Activated naive CD4-positive, alpha-beta T cell treated with anti-CD3 and anti-CD28 coated beads for 36 hours (primary cell): ENCODE measurements at regions of chr1 and their contacts with region 1.

Region 1: DNA sequence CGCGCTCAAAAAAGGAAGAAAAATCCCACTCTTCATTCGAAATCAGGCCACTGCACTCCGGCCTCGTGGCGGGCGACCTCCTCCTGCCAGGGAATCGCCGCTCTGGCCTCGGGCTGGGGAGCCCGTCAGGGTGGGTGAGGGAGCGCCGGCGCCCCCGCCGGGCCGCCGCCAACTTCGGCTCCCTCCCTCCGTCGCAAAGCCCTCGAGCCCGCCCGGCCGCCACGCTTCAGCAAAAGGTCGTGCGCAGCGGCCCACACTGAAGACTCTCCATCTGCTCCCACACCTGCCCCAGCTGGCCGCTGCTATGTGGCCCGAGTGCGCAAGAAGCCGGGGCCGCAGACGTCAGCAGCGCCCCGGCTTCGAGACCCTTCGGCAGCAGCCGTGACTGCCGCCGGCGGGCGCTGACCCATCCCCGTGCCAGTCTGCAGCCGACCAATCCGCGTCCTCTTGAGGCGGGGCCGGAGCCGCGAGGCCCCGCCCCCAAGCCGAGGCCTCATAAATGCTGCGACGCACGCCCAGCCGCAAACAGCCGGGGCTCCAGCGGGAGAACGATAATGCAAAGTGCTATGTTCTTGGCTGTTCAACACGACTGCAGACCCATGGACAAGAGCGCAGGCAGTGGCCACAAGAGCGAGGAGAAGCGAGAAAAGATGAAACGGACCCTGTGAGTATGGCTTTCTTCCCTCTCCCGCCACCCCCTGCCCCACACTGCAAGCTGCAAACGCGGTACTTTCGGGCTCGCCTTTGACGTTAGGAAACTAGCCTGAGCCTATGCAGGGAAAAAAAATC is at the start of gene RGS2:
- DNase-seq: peak; percentile 86
- H3K4me3 Mint-ChIP-seq: peak within 1 kb of the TSS; percentile 96
- H3K27ac Mint-ChIP-seq: peak within 1 kb of the TSS; percentile 82
- H3K4me1 Mint-ChIP-seq: peaks cover 31% of the 10 kb centered on the region
- H3K27me3 Mint-ChIP-seq: peaks cover 2% of the 10 kb centered on the region
- total RNA-seq, gene RGS2: 11.7 to 11.8 TPM

Region 2: DNA sequence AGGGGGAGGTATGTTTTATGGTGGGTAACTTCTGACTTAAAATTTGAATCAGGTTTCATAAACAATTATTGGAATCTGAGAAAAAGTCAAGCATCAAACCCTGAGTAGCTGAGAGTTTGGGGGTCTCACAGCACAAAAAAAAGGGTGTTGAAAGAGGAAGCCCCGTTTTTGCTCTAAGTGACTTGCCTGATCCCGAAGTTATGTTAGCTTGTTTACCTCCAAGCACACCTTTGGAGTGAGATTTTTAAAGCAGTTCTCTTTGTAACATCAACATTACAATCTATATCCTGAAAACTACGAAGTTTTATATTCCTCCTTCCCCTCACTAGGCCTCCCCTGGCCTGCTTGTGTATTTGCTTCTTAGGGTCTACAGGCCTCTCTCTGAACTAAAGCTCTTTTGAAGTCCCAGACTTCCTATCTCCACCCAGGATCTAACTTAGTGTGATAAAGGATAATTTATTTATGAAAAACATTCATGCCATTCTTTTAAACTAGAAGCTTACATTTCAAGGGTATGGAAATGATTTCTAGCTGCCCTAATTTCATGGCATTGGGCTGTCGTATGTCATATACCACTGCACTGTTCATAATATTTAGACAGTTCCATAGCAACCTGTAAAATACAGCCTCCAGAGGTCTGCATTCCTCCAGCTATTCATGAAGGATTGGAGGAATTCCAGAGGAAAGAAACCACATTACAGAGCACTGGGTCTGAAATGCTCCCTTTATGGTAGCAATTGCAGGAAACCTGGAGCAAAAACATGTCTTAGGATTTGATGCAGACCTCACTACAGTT is 269.2 kb before region 1 on chr1:
- CTCF ChIA-PET with region 1: interaction called, 4 read pairs
- intact Hi-C with region 1: loop called (anchors 5 kb)
- DNase-seq: no peak
- H3K4me3 Mint-ChIP-seq: no peak overlapping the region
- H3K27ac Mint-ChIP-seq: peak overlapping the region; percentile 51
- H3K4me1 Mint-ChIP-seq: peaks cover 28% of the 10 kb centered on the region
- H3K27me3 Mint-ChIP-seq: no peaks in the 10 kb centered on the region

Region 3: DNA sequence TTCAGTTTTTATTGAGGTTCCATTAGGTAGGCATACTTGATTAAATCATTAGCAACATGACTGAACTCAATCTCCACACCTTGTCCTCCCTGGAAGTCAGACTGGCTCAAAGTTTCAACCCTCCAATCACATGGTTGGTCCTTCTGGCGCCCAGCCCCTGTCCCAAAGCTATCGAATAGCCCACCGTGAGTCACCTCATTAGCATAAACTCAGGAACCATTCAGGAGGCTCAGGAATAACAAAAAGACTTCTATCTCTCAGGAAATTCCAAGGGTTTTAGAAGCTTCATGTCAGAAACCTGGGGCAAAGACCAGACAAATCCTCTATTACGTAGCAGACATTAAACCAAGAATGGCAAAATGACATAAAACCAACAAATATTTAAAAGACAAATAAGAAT is 78.7 kb after region 1 on chr1:
- CTCF ChIA-PET with region 1: no interaction called
- intact Hi-C with region 1: no loop called
- DNase-seq: no peak
- H3K4me3 Mint-ChIP-seq: no peak overlapping the region
- H3K27ac Mint-ChIP-seq: no peak overlapping the region
- H3K4me1 Mint-ChIP-seq: no peaks in the 10 kb centered on the region
- H3K27me3 Mint-ChIP-seq: no peaks in the 10 kb centered on the region

Region 4: GRCh38 chr1:192983349-192983980 is 174.8 kb after region 1 on chr1:
- CTCF ChIA-PET with region 1: interaction called, 3 read pairs
- intact Hi-C with region 1: loop called (anchors 1 kb)
- DNase-seq: peak; percentile 58
- H3K4me3 Mint-ChIP-seq: no peak overlapping the region
- H3K27ac Mint-ChIP-seq: peak overlapping the region; percentile 67
- H3K4me1 Mint-ChIP-seq: peaks cover 25% of the 10 kb centered on the region
- H3K27me3 Mint-ChIP-seq: no peaks in the 10 kb centered on the region

Region 5: GRCh38 chr1:193104906-193105820 is 296.5 kb after region 1 on chr1 and contains the start of gene GLRX2:
- CTCF ChIA-PET with region 1: interaction called, 3 read pairs
- intact Hi-C with region 1: loop called (anchors 5 kb)
- DNase-seq: peak; percentile 60
- H3K4me3 Mint-ChIP-seq: peak within 1 kb of the TSS; percentile 89
- H3K27ac Mint-ChIP-seq: peak within 1 kb of the TSS; percentile 68
- H3K4me1 Mint-ChIP-seq: peaks cover 19% of the 10 kb centered on the region
- H3K27me3 Mint-ChIP-seq: no peaks in the 10 kb centered on the region
- total RNA-seq, gene GLRX2: 16.5 to 18.5 TPM

Region 6: DNA sequence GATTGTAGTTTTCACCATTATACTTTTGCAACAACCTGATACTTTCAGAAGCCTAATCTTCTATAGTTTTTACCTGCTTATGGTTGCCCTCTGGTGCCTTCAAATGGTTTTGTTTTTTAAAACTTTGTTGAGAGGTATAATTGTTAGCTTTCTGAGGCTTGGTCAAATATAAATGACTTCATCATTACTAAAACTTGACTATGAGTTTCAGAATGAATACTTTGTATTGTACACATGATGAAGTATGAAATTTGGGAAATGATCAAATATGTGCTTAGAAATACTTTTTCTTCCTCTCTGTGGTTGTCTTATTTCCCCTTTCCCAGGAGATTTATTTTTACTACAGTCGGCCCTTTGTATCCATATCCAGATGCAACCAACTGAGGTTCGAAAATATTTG is 529.5 kb after region 1 on chr1:
- CTCF ChIA-PET with region 1: no interaction called
- intact Hi-C with region 1: loop called (anchors 5 kb)
- DNase-seq: no peak
- H3K4me3 Mint-ChIP-seq: no peak overlapping the region
- H3K27ac Mint-ChIP-seq: no peak overlapping the region
- H3K4me1 Mint-ChIP-seq: peaks cover 7% of the 10 kb centered on the region
- H3K27me3 Mint-ChIP-seq: no peaks in the 10 kb centered on the region

Region 7: GRCh38 chr1:194052514-194053333 is 1244.0 kb after region 1 on chr1:
- CTCF ChIA-PET with region 1: interaction called, 3 read pairs
- intact Hi-C with region 1: loop called (anchors 5 kb)
- DNase-seq: no peak
- H3K4me3 Mint-ChIP-seq: peak overlapping the region; percentile 55
- H3K27ac Mint-ChIP-seq: peak overlapping the region; percentile 81
- H3K4me1 Mint-ChIP-seq: peaks cover 59% of the 10 kb centered on the region
- H3K27me3 Mint-ChIP-seq: no peaks in the 10 kb centered on the region